Activated CD4-positive, alpha-beta T cell treated with anti-CD3 and anti-CD28 coated beads, Interleukin-2, amount 10 ng/mL, durations not matched to agents 24 days and 14 days (primary cell): ENCODE measurements at regions of chr19 and their contacts with region 1.

Region 1: DNA sequence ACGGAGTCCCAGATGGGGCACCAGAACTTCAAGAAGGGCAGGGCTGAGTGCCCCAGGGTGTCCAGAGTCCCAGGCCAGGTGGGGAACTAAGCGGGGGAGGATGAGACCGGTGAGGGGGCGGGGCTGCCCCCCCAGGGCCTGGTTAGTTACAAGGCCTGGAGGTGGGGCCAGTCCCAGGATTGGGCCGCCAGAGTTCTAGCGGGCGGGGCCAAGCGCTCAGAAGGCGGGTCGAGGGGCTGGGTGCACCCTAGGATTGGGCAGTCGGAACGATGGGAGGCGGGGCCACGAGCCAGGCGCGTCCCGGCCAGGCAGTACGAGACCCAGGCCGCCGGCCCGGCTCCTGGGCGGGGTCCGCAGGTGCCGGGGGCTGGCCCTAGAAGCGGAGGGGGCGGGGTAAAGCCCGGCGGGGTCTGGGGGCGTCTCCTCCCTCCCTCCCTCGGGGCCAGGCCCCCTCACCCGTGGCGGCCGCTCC is 571 bp downstream of the ZNF653 start:
- DNase-seq: peak; percentile 99
- H3K4me3 Mint-ChIP-seq: peak overlapping the region; percentile 92
- H3K27ac Mint-ChIP-seq: peak overlapping the region; percentile 97
- H3K4me1 Mint-ChIP-seq: peaks cover 20% of the 10 kb centered on the region
- H3K27me3 Mint-ChIP-seq: no peaks in the 10 kb centered on the region

Region 2: GRCh38 chr19:10960314-10961072 is 544.6 kb before region 1 on chr19 and contains the start of gene SMARCA4:
- intact Hi-C with region 1: loop called (anchors 5 kb)
- DNase-seq: peak; percentile 100
- H3K4me3 Mint-ChIP-seq: peak within 1 kb of the TSS; percentile 92
- H3K27ac Mint-ChIP-seq: peak within 1 kb of the TSS; percentile 93
- H3K4me1 Mint-ChIP-seq: peaks cover 36% of the 10 kb centered on the region
- H3K27me3 Mint-ChIP-seq: no peaks in the 10 kb centered on the region
- total RNA-seq, gene SMARCA4: 158 and 165 TPM in 2 replicates

Region 3: GRCh38 chr19:11338569-11339253 is 166.4 kb before region 1 on chr19:
- intact Hi-C with region 1: no loop called
- DNase-seq: no peak
- H3K4me3 Mint-ChIP-seq: peak overlapping the region; percentile 81
- H3K27ac Mint-ChIP-seq: no peak overlapping the region
- H3K4me1 Mint-ChIP-seq: peaks cover 18% of the 10 kb centered on the region
- H3K27me3 Mint-ChIP-seq: no peaks in the 10 kb centered on the region

Region 4: GRCh38 chr19:11374433-11375142 is 130.5 kb before region 1 on chr19 and contains the start of gene SWSAP1:
- intact Hi-C with region 1: loop called (anchors 2 kb)
- DNase-seq: peak; percentile 99
- H3K4me3 Mint-ChIP-seq: no peak within 1 kb of the TSS
- H3K27ac Mint-ChIP-seq: no peak within 1 kb of the TSS
- H3K4me1 Mint-ChIP-seq: peaks cover 25% of the 10 kb centered on the region
- H3K27me3 Mint-ChIP-seq: no peaks in the 10 kb centered on the region
- total RNA-seq, gene SWSAP1: 2.3 and 2.6 TPM in 2 replicates

Region 5: DNA sequence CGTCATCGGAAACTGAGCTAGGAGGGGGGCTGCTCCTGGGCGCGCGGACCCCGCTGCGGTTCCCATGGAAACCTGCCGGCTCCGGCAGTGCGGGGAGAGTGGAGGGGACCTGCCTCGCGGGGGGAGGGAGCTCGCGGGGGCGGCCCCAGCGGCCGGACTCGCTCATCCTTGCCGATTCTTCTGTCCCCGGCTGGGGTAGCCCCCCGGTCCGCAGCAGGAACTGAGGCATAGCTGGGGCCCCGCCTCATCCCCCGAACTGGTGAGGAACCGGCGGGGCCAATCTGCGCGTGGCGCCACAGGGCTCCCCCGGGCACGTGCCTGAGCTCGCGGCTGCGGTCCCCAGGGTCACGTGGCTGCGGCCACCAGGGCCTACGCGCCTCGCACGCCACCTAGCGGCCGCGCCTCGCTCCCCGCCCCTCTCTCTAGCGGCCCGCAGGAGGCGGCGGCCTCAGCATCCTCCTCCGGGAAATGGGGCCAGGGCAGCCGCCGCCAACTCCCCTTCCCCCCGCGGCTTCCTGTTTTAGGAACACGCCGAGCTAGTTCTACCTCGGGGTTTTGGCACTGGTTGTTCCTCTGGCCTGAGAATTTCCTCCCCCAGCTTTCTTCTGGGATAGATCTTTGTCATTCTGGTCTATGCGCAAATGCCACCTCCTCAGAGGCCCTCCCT is 22.6 kb before region 1 on chr19:
- intact Hi-C with region 1: loop called (anchors 1 kb)
- DNase-seq: peak; percentile 96
- H3K4me3 Mint-ChIP-seq: peak overlapping the region; percentile 84
- H3K27ac Mint-ChIP-seq: peak overlapping the region; percentile 90
- H3K4me1 Mint-ChIP-seq: peaks cover 18% of the 10 kb centered on the region
- H3K27me3 Mint-ChIP-seq: peaks cover 29% of the 10 kb centered on the region

Region 6: GRCh38 chr19:11528551-11529341 is 23.7 kb after region 1 on chr19 and contains the start of gene ECSIT:
- intact Hi-C with region 1: loop called (anchors 1 kb)
- DNase-seq: peak; percentile 97
- H3K4me3 Mint-ChIP-seq: peak within 1 kb of the TSS; percentile 93
- H3K27ac Mint-ChIP-seq: peak within 1 kb of the TSS; percentile 93
- H3K4me1 Mint-ChIP-seq: peaks cover 15% of the 10 kb centered on the region
- H3K27me3 Mint-ChIP-seq: no peaks in the 10 kb centered on the region
- total RNA-seq, gene ECSIT: 39.7 and 41.6 TPM in 2 replicates

Region 7: DNA sequence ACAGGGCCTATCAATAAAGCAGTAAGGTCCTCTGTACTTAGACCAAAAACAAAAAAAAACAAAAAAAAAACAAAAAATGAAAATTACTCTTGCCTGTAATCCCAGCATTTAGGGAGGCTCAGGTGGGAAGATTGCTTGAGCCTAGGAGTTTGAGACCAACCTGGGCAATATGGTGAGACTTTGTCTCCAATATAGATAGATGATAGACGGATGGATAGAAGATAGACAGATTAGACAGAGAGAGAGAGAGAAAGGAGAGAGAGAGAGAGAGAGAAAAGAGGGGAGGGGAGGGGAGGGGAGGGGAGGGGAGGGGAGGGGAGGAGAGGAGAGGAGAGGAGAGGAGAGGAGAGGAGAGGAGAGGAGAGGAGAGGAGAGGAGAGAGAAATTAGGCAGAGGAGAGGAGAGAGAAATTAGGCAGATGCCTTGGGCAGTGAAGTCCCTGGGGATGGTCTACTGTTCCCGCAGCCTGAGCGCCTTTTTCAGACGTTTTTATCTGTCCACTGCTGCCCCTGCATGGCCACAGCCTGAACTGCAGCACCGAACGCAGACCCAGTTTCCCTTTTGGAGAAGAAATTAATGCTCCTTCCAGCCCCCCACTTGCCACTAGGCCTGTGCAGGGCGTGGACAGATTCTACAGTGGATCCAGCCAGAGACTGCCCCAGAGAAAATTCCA is 82.4 kb after region 1 on chr19:
- intact Hi-C with region 1: loop called (anchors 2 kb)
- DNase-seq: peak; percentile 95
- H3K4me3 Mint-ChIP-seq: no peak overlapping the region
- H3K27ac Mint-ChIP-seq: peak overlapping the region; percentile 26
- H3K4me1 Mint-ChIP-seq: peaks cover 3% of the 10 kb centered on the region
- H3K27me3 Mint-ChIP-seq: no peaks in the 10 kb centered on the region